T-cell (primary cell): ENCODE measurements at regions of chr9 and their contacts with region 1.

Region 1: GRCh38 chr9:26193237-26193636 is 515.0 kb upstream of the TUSC1 start:
- DNase-seq: no peak
- ATAC-seq: no peak
- H3K4me3 ChIP-seq: no peak overlapping the region
- H3K4me3 Mint-ChIP-seq: no peak overlapping the region
- H3K27ac ChIP-seq: no peak overlapping the region
- H3K27ac Mint-ChIP-seq: no peak overlapping the region
- H3K4me1 ChIP-seq: no peaks in the 10 kb centered on the region
- H3K4me1 Mint-ChIP-seq: no peaks in the 10 kb centered on the region
- H3K27me3 ChIP-seq: no peaks in the 10 kb centered on the region
- H3K27me3 Mint-ChIP-seq: no peaks in the 10 kb centered on the region

Region 2: DNA sequence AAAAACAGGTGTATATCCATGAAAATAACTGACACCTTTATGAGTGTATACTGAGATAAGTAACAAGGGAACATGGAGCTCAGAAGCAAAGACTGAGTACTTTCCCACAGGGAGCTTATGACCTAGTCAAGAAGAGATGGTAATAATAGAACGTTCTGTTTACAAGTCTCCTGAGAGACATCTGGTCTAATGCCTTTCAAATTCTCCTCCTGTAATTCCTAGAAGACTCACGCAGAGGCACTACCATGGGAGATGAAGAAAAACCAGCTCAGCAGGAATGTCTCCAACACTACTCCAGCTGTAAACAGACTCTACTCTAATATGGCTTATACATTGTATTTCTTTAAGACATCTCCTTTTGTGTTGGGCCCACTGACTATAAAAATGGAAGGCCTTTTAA is 11.4 kb before region 1 on chr9:
- CTCF ChIA-PET with region 1: no interaction called
- POLR2A ChIA-PET with region 1: interaction called in 1 of 2 experiments, 11 read pairs
- DNase-seq: no peak
- ATAC-seq: no peak
- H3K4me3 ChIP-seq: no peak overlapping the region
- H3K4me3 Mint-ChIP-seq: no peak overlapping the region
- H3K27ac ChIP-seq: no peak overlapping the region
- H3K27ac Mint-ChIP-seq: no peak overlapping the region
- H3K4me1 ChIP-seq: no peaks in the 10 kb centered on the region
- H3K4me1 Mint-ChIP-seq: no peaks in the 10 kb centered on the region
- H3K27me3 ChIP-seq: no peaks in the 10 kb centered on the region
- H3K27me3 Mint-ChIP-seq: no peaks in the 10 kb centered on the region